ENCODE measurements at regions of chr9 and their contacts with region 1.

Region 1: GRCh38 chr9:74773886-74774479 is 113.7 kb downstream of the TRPM6 start:
- DNase-seq: peak; percentile 80
- ATAC-seq: no peak

Region 2: DNA sequence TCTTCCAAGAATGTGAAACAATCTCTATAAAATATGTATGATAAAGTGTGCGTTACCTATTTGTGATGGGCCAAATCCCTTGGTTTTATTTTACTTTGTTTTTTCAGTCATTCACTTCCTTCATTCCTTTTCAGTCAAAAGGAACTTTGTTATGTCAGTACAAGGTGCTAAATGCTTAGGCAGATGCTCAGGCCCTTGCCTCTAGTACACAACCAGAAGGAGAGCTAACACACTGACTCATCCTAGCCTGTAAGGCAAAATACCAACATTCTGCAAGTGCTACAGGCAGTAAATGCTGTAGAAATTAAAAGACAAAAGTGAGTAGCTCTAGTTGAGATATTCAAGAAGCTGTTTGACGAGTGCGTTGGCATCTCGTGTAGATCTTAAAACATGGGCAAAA is 64.4 kb after region 1 on chr9:
- intact Hi-C with region 1: no loop called
- DNase-seq: no peak
- ATAC-seq: no peak

Region 3: DNA sequence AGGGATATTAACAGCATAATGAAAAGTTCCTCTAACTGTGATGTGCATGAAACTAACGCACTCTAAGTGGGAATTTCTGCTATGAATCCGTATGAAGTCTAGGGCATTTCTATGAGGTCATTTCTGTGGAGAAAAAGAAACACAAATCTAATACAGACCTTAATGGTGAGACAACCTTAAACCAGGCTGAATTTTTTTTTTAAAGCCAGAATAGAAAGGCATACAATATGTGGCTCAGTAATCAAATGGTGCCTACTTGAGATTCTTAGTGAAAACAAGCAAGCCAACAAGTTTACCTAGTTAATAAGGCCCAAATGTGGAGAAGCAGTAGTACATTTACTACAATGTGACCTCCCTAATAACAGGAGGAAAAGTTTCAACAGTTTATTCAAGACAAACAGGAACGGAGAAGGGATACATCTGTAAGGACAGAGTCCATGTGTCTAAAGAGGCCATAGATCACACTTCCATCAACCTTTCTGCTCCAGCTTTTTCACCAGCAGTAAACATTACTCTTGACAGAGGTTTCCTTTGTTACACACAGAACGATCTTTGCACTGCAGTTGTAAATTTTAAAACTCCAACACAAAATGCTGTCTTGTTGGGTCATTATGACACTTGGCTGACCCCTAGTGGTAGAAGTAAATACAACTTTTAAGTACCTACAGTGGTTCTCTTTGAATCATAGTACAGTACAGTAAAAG is 227.9 kb after region 1 on chr9:
- intact Hi-C with region 1: loop called (anchors 1 kb)
- DNase-seq: no peak
- ATAC-seq: peak; percentile 74

Region 4: GRCh38 chr9:75071530-75072124 is 297.6 kb after region 1 on chr9:
- intact Hi-C with region 1: loop called (anchors 2 kb)
- DNase-seq: no peak
- ATAC-seq: no peak

Measured in Right ventricle myocardium inferior (tissue), 1 donor.